ENCODE measurements at regions of chr10 and their contacts with region 1.

Region 1: DNA sequence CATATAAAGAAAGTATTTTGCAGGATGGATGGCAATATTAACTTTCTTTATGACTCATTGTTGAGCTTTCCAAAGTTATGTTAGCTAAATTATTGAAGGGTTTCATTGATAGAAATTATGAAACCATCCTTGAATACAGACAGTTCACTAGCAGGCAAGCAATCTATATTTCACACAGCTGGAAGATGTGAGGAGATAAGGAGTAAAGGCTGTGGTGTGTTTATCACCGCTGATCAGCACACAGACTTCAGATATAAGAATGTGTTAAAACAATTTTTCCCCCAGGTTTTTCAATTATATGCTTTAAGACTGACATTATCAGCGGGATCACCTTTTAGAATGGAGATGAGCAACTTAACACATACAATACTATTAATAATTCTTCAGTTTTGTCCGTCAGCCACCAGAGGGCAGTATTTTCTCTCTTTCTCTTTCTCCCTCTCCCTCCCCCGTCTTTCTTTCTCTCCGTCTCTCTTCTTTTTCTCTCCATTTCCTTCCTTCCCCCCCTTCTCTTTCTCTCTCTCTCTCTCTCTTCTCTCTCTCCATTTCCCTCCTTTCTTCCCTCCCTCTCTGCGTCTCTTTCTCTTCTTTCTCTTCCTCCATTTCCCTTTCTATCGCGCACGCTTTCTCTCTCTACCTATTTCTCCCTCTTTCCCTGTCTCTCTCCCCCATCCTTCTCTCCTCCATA is 62.9 kb upstream of the FAM171A1 start:
- DNase-seq: peak in 1 of 5 donors; percentile 53
- H3K4me3 ChIP-seq: peak overlapping the region; percentile 24
- H3K27ac ChIP-seq: no peak overlapping the region
- H3K4me1 ChIP-seq: peaks cover 3% of the 10 kb centered on the region
- H3K27me3 ChIP-seq: no peaks in the 10 kb centered on the region
- CTCF ChIP-seq: peak; percentile 67 to 75 (median 74)
- EP300 ChIP-seq: no peak
- POLR2A ChIP-seq: no peak

Region 2: GRCh38 chr10:15824498-15824897 is 390.5 kb after region 1 on chr10:
- intact Hi-C with region 1: loop called (anchors 5 to 10 kb)
- DNase-seq: no peak
- H3K4me3 ChIP-seq: no peak overlapping the region
- H3K27ac ChIP-seq: no peak overlapping the region
- H3K4me1 ChIP-seq: no peaks in the 10 kb centered on the region
- H3K27me3 ChIP-seq: no peaks in the 10 kb centered on the region
- CTCF ChIP-seq: peak; percentile 33 to 51 (median 39)
- EP300 ChIP-seq: no peak
- POLR2A ChIP-seq: no peak

Measured in ovary (tissue), 10 donors.